Caco-2 (cell line): ENCODE measurements at regions of chr2 and their contacts with region 1.

Region 1: DNA sequence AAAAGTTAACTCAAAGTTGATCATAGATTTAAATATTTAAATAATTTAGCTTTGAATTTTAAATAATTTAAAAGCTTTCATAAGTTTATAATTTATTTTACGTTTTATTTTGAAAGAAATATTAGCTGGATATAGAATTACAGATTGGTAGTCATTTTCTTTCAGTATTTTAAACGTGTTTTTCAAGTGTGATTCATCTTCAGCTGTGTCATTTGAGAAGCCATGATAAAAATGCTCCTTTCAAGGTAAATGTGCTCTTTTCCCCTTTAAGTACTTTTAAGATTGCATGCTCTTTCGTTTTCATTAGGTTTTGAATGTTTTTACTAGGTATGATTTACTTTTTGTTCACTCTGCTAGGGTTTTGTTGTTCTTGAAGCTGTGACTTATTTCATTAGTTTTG is 116.8 kb upstream of the FIGN start:
- DNase-seq: no peak
- H3K4me3 ChIP-seq: no peak overlapping the region
- H3K4me3 Mint-ChIP-seq: no peak overlapping the region
- H3K27ac Mint-ChIP-seq: no peak overlapping the region
- H3K4me1 ChIP-seq: peaks cover 35% of the 10 kb centered on the region
- H3K4me1 Mint-ChIP-seq: peaks cover 38% of the 10 kb centered on the region
- H3K27me3 ChIP-seq: no peaks in the 10 kb centered on the region
- H3K27me3 Mint-ChIP-seq: no peaks in the 10 kb centered on the region
- CTCF ChIP-seq: no peak

Region 2: DNA sequence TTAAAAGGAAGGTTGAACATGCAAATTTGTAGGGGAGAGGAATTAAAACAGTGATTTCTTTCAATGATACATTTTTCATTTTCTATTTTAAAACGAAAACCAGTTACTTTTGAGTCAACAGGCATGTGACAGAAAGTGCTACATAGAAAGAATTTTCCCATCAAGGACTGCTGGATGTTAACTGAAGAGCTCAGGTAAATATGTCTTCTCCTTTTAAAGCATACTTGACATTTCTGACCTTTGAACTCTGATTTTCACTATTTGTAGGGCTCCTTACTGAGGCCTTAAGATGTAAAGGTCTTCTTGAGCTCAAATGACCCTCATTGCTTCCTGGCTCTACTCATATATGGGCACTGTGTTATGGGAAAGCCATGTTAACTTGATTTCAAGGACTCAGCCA is 149.2 kb before region 1 on chr2:
- CTCF ChIA-PET with region 1: no interaction called
- POLR2A ChIA-PET with region 1: no interaction called
- intact Hi-C with region 1: loop called (anchors 1 kb)
- DNase-seq: peak in 1 of 2 experiments; percentile 30
- H3K4me3 ChIP-seq: no peak overlapping the region
- H3K4me3 Mint-ChIP-seq: no peak overlapping the region
- H3K27ac Mint-ChIP-seq: peak overlapping the region; percentile 22
- H3K4me1 ChIP-seq: peaks cover 24% of the 10 kb centered on the region
- H3K4me1 Mint-ChIP-seq: peaks cover 22% of the 10 kb centered on the region
- H3K27me3 ChIP-seq: no peaks in the 10 kb centered on the region
- H3K27me3 Mint-ChIP-seq: no peaks in the 10 kb centered on the region
- CTCF ChIP-seq: no peak

Region 3: GRCh38 chr2:163812926-163813520 is 39.6 kb before region 1 on chr2:
- CTCF ChIA-PET with region 1: no interaction called
- POLR2A ChIA-PET with region 1: no interaction called
- intact Hi-C with region 1: loop called (anchors 5 kb)
- DNase-seq: no peak
- H3K4me3 ChIP-seq: no peak overlapping the region
- H3K4me3 Mint-ChIP-seq: no peak overlapping the region
- H3K27ac Mint-ChIP-seq: peak overlapping the region; percentile 1
- H3K4me1 ChIP-seq: peaks cover 16% of the 10 kb centered on the region
- H3K4me1 Mint-ChIP-seq: peaks cover 9% of the 10 kb centered on the region
- H3K27me3 ChIP-seq: no peaks in the 10 kb centered on the region
- H3K27me3 Mint-ChIP-seq: no peaks in the 10 kb centered on the region
- CTCF ChIP-seq: no peak

Region 4: DNA sequence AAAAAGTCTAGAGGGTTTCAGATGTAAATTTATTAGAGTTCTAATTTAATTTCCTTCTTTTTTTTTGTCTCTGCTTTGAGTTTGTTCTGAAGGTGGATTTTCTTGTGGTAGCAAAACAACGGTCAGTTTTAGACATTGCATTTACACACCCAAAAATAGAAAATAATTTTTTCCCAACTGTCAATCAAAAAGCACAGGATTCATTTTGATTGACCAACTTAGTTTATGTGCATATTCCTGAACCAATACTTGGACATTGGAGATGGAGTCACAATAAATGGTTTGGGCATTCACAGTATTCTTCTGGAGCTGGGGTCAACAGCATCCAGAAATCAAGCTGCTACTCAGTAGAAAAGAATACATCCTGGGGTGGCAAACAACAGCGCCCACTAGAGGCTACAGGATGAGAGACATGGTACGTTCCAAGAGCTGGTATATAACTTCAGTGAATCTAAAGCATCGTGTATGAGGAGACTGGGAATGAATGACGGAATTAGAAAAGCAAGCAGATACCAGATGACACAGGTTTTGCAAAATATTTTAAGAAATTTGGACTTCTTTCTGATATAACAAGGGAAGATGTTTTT is 26.0 kb after region 1 on chr2:
- CTCF ChIA-PET with region 1: no interaction called
- POLR2A ChIA-PET with region 1: no interaction called
- intact Hi-C with region 1: loop called (anchors 1 kb)
- DNase-seq: peak in 1 of 2 experiments; percentile 15
- H3K4me3 ChIP-seq: no peak overlapping the region
- H3K4me3 Mint-ChIP-seq: no peak overlapping the region
- H3K27ac Mint-ChIP-seq: peak overlapping the region; percentile 11
- H3K4me1 ChIP-seq: peaks cover 21% of the 10 kb centered on the region
- H3K4me1 Mint-ChIP-seq: peaks cover 15% of the 10 kb centered on the region
- H3K27me3 ChIP-seq: no peaks in the 10 kb centered on the region
- H3K27me3 Mint-ChIP-seq: no peaks in the 10 kb centered on the region
- CTCF ChIP-seq: peak; percentile 31 to 49